ENCODE measurements at regions of chr9 and their contacts with region 1.

Region 1: GRCh38 chr9:77215874-77216273 is 38.5 kb downstream of the VPS13A start:
- DNase-seq: no peak
- H3K4me3 ChIP-seq: no peak overlapping the region
- H3K4me3 Mint-ChIP-seq: no peak overlapping the region
- H3K27ac Mint-ChIP-seq: no peak overlapping the region
- H3K4me1 ChIP-seq: no peaks in the 10 kb centered on the region
- H3K4me1 Mint-ChIP-seq: no peaks in the 10 kb centered on the region
- H3K27me3 ChIP-seq: no peaks in the 10 kb centered on the region
- H3K27me3 Mint-ChIP-seq: no peaks in the 10 kb centered on the region
- CTCF ChIP-seq: peak in 1 of 2 experiments; percentile 24

Region 2: GRCh38 chr9:76980576-76980975 is 235.3 kb before region 1 on chr9:
- CTCF ChIA-PET with region 1: no interaction called
- POLR2A ChIA-PET with region 1: no interaction called
- intact Hi-C with region 1: no loop called
- DNase-seq: no peak
- H3K4me3 ChIP-seq: no peak overlapping the region
- H3K4me3 Mint-ChIP-seq: no peak overlapping the region
- H3K27ac Mint-ChIP-seq: no peak overlapping the region
- H3K4me1 ChIP-seq: no peaks in the 10 kb centered on the region
- H3K4me1 Mint-ChIP-seq: no peaks in the 10 kb centered on the region
- H3K27me3 ChIP-seq: no peaks in the 10 kb centered on the region
- H3K27me3 Mint-ChIP-seq: peaks cover 8% of the 10 kb centered on the region
- CTCF ChIP-seq: no peak

Region 3: DNA sequence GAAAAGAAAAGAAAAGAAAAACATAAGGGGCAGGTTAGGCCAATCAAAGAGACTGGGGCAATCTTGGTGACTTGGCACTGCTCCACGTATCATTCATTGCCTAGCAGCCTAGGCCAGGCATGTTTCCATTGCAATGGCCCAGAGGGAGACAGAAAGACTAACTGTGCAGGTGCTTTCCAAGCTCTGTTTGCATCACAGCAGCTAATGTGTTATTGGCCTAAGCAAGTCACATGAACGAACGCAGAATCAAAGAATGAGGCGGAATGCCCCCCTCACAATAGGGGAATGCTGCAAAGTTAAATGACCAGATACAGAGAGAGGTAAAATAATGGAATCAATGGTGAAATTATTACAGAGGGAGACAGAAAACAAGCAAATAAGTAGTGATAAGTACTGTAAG is 49.7 kb before region 1 on chr9:
- CTCF ChIA-PET with region 1: interaction called, 5 read pairs
- POLR2A ChIA-PET with region 1: no interaction called
- intact Hi-C with region 1: loop called (anchors 2 kb)
- DNase-seq: no peak
- H3K4me3 ChIP-seq: no peak overlapping the region
- H3K4me3 Mint-ChIP-seq: no peak overlapping the region
- H3K27ac Mint-ChIP-seq: no peak overlapping the region
- H3K4me1 ChIP-seq: no peaks in the 10 kb centered on the region
- H3K4me1 Mint-ChIP-seq: no peaks in the 10 kb centered on the region
- H3K27me3 ChIP-seq: no peaks in the 10 kb centered on the region
- H3K27me3 Mint-ChIP-seq: no peaks in the 10 kb centered on the region
- CTCF ChIP-seq: no peak